ENCODE measurements at regions of chr4 and their contacts with region 1.

Region 1: GRCh38 chr4:77156533-77156911 is 485 bp upstream of the CCNG2 start:
- DNase-seq: peak; percentile 100
- H3K4me3 Mint-ChIP-seq: peak overlapping the region; percentile 94
- H3K27ac Mint-ChIP-seq: peak overlapping the region; percentile 98
- H3K4me1 Mint-ChIP-seq: peaks cover 16% of the 10 kb centered on the region
- H3K27me3 Mint-ChIP-seq: no peaks in the 10 kb centered on the region
- CTCF ChIP-seq: no peak

Region 2: DNA sequence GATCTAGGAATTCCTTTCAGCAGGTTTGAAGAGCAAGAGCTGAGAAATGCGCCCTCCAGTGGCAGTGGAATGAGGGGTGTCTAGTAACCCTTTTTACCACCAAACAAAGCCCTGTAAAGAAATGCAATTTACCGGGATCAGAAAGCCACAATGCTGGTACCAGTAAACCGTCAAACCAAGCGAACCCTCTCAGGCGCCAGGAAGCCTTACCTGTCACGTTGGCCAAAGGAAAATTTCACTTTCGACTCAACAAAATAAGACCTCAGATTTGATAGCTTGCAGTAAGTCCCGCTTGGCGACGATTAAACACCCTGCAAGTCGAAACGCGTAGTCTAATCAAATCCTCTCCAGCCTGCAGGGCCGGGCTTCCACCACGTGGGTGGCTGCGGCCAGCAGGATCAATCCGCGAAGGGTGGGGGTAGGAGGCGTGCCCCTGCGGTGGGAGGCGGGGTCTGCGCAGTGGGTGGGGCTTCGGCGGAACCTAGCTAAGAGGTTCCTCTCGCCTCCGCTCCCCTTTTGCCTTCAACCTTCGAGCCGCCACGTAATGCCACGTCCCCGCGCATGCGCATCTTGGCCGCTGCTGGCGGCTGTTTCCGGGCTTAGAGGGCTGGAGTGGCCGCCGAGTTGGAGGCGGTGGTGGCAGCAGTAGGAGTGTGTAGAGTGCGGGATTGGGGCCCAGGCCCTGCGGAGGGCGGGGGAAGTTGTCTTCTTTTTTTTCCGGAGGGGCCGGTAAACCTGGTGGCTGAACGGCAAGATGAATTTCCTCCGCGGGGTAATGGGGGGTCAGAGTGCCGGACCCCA is 1432.3 kb before region 1 on chr4 and contains the start of gene USO1:
- CTCF ChIA-PET with region 1: no interaction called
- POLR2A ChIA-PET with region 1: no interaction called
- intact Hi-C with region 1: no loop called
- DNase-seq: peak; percentile 98
- H3K4me3 Mint-ChIP-seq: peak within 1 kb of the TSS; percentile 100
- H3K27ac Mint-ChIP-seq: peak within 1 kb of the TSS; percentile 100
- H3K4me1 Mint-ChIP-seq: peaks cover 32% of the 10 kb centered on the region
- H3K27me3 Mint-ChIP-seq: no peaks in the 10 kb centered on the region
- CTCF ChIP-seq: peak; percentile 59
- total RNA-seq, gene USO1: 105 and 108 TPM in 2 replicates

Region 3: DNA sequence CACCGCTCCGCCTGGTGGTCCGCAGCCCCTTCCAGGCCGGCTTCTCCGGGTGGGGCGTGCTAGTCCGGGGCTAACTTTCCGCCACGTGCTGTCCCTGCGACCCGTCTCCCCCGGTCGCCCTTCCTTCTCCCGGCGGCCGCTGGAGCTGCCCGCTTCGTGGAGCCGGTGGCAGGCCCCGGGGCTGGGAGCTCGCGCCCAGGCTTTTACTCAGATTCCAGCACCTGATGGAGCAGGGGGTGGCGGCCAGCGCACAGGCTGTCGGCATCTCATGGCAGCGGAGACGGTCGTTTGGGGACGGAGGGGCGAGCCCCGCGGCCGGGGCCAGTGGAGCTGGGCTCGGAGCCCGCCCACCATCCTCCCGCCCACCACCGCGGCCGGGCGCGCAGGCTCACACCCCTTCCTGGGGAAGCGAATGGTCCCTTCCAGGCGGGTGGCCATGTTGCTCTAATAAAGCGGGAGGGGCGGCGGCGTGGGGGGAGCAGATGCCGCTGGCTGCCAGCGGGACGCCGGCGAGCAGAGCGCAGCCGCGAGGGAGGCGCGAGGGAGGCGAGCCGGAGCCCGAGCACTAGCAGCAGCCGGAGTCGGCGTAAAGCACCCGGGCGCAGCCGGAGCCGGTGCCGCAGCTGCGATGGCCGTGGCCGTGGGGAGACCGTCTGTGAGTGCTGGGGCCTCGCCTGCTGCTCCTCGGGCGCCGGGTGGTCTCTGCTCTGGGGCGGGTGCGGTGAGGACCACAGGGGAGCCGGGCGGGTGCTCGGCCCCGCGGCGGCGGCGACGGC is 207.1 kb before region 1 on chr4 and contains the start of gene SEPTIN11:
- CTCF ChIA-PET with region 1: no interaction called
- POLR2A ChIA-PET with region 1: no interaction called
- intact Hi-C with region 1: loop called (anchors 5 kb)
- DNase-seq: peak; percentile 93
- H3K4me3 Mint-ChIP-seq: peak within 1 kb of the TSS; percentile 81
- H3K27ac Mint-ChIP-seq: peak within 1 kb of the TSS; percentile 76
- H3K4me1 Mint-ChIP-seq: peaks cover 28% of the 10 kb centered on the region
- H3K27me3 Mint-ChIP-seq: no peaks in the 10 kb centered on the region
- CTCF ChIP-seq: no peak
- total RNA-seq, gene SEPTIN11: 57.1 and 82.7 TPM in 2 replicates

Region 4: GRCh38 chr4:77065382-77065781 is 91.1 kb before region 1 on chr4:
- CTCF ChIA-PET with region 1: interaction called, 4 read pairs
- POLR2A ChIA-PET with region 1: interaction called, 223 read pairs
- intact Hi-C with region 1: no loop called
- DNase-seq: no peak
- H3K4me3 Mint-ChIP-seq: no peak overlapping the region
- H3K27ac Mint-ChIP-seq: no peak overlapping the region
- H3K4me1 Mint-ChIP-seq: peaks cover 28% of the 10 kb centered on the region
- H3K27me3 Mint-ChIP-seq: no peaks in the 10 kb centered on the region
- CTCF ChIP-seq: no peak

Region 5: GRCh38 chr4:77095101-77095821 is 61.3 kb before region 1 on chr4:
- CTCF ChIA-PET with region 1: interaction called, 40 read pairs
- POLR2A ChIA-PET with region 1: interaction called, 248 read pairs
- intact Hi-C with region 1: loop called (anchors 5 kb)
- DNase-seq: peak; percentile 70
- H3K4me3 Mint-ChIP-seq: no peak overlapping the region
- H3K27ac Mint-ChIP-seq: peak overlapping the region; percentile 16
- H3K4me1 Mint-ChIP-seq: peaks cover 24% of the 10 kb centered on the region
- H3K27me3 Mint-ChIP-seq: no peaks in the 10 kb centered on the region
- CTCF ChIP-seq: peak; percentile 58

Region 6: DNA sequence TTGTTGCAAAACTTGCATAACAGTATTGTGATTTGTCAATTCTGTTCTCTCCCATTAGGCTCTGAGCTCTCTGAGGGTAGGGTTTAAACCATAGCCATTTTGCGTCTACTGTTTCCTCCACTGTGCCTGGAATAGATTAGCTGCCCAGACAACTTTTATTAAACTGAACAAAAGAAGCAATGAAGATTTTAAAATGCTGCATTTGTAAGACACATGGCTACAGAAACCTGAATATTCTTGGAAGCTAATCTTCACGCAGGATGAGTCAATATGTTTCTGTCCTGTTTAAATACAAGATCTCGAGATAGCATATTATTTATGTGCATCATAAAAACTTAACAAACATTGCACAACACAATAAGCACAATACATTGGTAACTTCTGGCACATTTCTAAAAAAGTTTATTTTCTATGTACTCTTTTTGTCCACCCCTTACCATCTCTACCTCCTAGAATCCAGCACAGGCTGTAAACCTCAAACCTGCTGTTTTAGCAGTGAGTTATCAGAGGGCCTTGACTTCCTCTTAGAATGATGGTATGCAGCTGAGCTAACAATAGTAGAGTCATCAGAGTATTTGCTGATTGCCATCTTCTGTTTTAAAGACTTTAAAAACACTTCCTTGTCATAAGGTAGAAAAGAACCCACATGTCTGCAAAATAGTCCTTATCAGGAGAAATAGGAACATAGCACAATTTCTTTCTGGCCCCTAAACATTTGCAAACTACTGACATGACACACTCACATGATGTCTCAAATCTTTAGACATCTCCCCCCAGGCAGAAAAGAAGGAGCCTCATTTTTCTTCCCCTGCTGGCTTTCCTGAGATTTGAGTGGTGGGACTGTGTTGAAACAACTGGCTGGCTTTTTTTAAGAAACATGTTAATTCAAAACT is 10.1 kb before region 1 on chr4:
- CTCF ChIA-PET with region 1: interaction called, 3 read pairs
- POLR2A ChIA-PET with region 1: interaction called, 94 read pairs
- intact Hi-C with region 1: no loop called
- DNase-seq: peak; percentile 48
- H3K4me3 Mint-ChIP-seq: peak overlapping the region; percentile 44
- H3K27ac Mint-ChIP-seq: peak overlapping the region; percentile 68
- H3K4me1 Mint-ChIP-seq: peaks cover 26% of the 10 kb centered on the region
- H3K27me3 Mint-ChIP-seq: no peaks in the 10 kb centered on the region
- CTCF ChIP-seq: no peak